ENCODE measurements at regions of chr5 and their contacts with region 1.

Region 1: GRCh38 chr5:43840424-43841125 is 237.6 kb downstream of the NNT start:
- DNase-seq: no peak
- H3K4me3 ChIP-seq: no peak overlapping the region
- H3K27ac ChIP-seq: no peak overlapping the region
- H3K4me1 ChIP-seq: no peaks in the 10 kb centered on the region
- H3K27me3 ChIP-seq: no peaks in the 10 kb centered on the region
- CTCF ChIP-seq: no peak

Region 2: GRCh38 chr5:41973887-41974286 is 1866.7 kb before region 1 on chr5:
- CTCF ChIA-PET with region 1: no interaction called
- POLR2A ChIA-PET with region 1: no interaction called
- intact Hi-C with region 1: loop called (anchors 5 kb)
- DNase-seq: no peak
- H3K4me3 ChIP-seq: no peak overlapping the region
- H3K27ac ChIP-seq: no peak overlapping the region
- H3K4me1 ChIP-seq: no peaks in the 10 kb centered on the region
- H3K27me3 ChIP-seq: no peaks in the 10 kb centered on the region
- CTCF ChIP-seq: no peak

Region 3: DNA sequence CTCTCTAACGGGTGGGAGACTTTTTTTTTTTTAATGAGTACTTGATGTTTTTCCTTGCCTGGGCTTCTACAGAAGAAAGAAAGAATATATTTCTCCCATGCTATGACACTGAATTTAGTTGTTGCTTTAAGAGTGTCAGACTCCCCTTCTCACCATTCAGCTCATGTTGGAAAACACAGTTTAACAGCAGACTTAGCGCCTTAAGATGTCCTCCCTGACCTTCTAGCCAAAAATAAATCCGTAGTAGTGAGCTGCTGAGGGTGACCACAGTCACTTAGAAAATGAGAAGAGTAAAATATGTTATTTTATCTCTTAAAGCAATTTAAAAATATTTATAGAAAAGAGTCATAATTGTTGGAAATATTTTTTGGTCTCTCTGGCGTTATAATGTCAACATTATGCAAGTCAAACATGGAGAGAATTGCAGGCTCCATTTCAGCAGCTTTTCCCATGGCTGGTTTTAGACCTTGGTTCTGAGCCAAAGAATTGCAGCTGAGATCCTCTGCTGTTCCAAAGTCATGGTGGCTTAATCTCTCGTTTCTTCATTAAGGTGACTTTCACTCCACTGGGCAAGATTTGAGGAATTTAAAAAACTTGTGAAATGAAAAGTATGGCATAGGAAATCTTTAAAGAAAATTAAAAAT is 1273.8 kb before region 1 on chr5:
- CTCF ChIA-PET with region 1: no interaction called
- POLR2A ChIA-PET with region 1: no interaction called
- intact Hi-C with region 1: no loop called
- DNase-seq: no peak
- H3K4me3 ChIP-seq: no peak overlapping the region
- H3K27ac ChIP-seq: no peak overlapping the region
- H3K4me1 ChIP-seq: no peaks in the 10 kb centered on the region
- H3K27me3 ChIP-seq: peaks cover 12% of the 10 kb centered on the region; the same call in 1 of the 2 replicates
- CTCF ChIP-seq: no peak

Region 4: DNA sequence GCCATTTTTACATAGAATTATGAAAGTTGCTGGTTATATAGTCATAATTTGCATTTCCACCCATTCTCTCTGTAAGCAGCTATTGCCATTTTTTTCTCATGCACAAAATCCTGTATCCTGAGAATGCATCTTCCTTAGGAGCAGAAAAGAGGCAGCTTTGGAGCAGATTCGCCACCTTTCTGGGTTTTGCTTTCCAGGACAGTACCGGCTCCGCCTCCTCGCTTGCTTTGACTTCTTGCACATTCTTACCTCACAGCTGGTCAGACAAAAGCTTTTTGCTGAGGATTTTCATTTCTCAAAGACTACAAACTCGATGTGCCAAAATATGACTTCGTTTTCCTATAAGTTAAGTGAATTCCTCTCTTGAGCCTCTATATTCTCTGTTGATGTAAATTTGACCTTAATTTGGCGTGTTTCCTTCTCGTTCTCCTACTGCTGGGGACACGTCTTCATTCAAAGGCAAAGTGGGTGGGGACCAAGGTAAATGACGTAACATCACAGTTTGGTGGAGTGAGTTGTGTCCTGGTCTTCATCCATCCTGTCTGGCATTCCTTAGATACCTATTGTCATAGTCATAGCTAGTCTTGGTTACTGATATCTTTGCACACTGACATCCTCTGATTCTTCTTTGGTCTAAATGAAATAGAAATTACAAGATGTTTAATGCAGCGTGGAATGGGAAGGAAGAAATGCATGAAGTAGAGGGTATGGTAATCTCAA is 129.2 kb before region 1 on chr5:
- CTCF ChIA-PET with region 1: no interaction called
- POLR2A ChIA-PET with region 1: no interaction called
- intact Hi-C with region 1: no loop called
- DNase-seq: peak in 1 of 2 experiments; percentile 48
- H3K4me3 ChIP-seq: no peak overlapping the region
- H3K27ac ChIP-seq: no peak overlapping the region
- H3K4me1 ChIP-seq: no peaks in the 10 kb centered on the region
- H3K27me3 ChIP-seq: 0 out of 2 replicates have a peak, but pooled peaks cover 3% of the 10 kb centered on the region
- CTCF ChIP-seq: no peak

Region 5: DNA sequence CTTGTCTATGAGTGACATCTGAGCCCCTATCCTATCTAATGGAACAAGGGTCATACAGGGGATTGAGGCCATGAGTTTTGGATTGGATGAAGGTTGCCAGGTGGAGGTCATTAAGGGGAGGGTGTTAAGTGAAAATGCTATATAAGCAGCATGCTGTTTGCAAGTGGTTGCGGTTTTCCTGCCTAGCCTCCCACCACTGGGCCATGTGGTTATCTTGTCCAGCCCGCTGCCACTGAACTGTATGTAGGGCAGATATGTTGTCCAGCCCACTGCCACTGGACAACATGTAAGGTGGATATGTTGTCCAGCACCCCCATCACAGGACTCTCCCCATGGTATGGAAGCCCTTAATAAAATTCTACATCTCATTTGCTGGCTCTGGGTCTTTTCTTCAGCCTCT is 348.7 kb after region 1 on chr5:
- CTCF ChIA-PET with region 1: no interaction called
- POLR2A ChIA-PET with region 1: no interaction called
- intact Hi-C with region 1: no loop called
- DNase-seq: no peak
- H3K4me3 ChIP-seq: no peak overlapping the region
- H3K27ac ChIP-seq: no peak overlapping the region
- H3K4me1 ChIP-seq: no peaks in the 10 kb centered on the region
- H3K27me3 ChIP-seq: no peaks in the 10 kb centered on the region
- CTCF ChIP-seq: no peak